ENCODE measurements at regions of chr1 and their contacts with region 1.

Region 1: GRCh38 chr1:85134576-85135395 is 66.0 kb downstream of the SYDE2 start:
- DNase-seq: no peak
- ATAC-seq: 0 out of 2 replicates have a peak, but pooled peaks have one; percentile 46
- H3K4me3 ChIP-seq: no peak overlapping the region
- H3K27ac ChIP-seq: no peak overlapping the region
- H3K4me1 ChIP-seq: peaks cover 5% of the 10 kb centered on the region; the same call in 1 of the 2 replicates
- H3K27me3 ChIP-seq: peaks cover 4% of the 10 kb centered on the region
- CTCF ChIP-seq: no peak

Region 2: DNA sequence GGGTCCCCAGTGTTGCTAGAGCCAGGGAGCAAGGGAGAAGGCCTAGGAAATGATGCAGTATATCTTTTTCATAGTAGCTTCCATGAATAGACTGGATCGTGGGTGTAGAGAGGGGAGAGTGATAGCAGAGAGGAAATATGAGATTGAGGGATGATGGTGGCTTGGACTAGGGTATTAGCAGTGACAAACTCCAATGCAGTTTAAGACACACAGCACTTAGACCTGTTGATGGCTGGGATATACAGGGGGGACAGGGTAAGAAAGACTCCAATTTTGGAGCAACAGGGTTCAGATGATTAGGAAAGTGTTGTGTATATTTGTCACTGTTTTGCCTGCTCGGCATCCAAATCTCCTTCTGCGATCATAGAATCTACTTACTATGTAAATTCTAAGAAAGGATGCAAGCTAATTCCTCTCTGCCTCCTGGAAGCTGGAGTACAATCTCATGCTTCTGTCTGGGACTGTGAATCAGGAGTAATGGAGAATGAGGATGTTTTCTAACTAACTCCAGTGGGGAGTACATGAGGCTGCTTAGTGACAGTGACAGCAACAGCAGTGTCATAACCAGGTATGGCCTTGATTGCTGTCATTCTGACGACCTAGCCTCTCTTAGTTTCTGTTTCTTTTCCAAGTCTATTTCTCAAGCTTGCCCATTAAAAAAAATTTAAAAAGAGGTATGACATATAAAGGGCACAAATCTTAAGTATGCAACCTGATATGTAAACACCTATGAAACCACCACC is 18.5 kb after region 1 on chr1:
- CTCF ChIA-PET with region 1: interaction called, 4 read pairs
- POLR2A ChIA-PET with region 1: interaction called, 13 read pairs
- in situ Hi-C with region 1: no loop called
- intact Hi-C with region 1: no loop called
- DNase-seq: no peak
- ATAC-seq: peak; percentile 52; the same call in 1 of the 2 replicates
- H3K4me3 ChIP-seq: no peak overlapping the region
- H3K27ac ChIP-seq: no peak overlapping the region
- H3K4me1 ChIP-seq: no peaks in the 10 kb centered on the region
- H3K27me3 ChIP-seq: no peaks in the 10 kb centered on the region
- CTCF ChIP-seq: no peak; the same call in 1 of the 2 replicates

Region 3: DNA sequence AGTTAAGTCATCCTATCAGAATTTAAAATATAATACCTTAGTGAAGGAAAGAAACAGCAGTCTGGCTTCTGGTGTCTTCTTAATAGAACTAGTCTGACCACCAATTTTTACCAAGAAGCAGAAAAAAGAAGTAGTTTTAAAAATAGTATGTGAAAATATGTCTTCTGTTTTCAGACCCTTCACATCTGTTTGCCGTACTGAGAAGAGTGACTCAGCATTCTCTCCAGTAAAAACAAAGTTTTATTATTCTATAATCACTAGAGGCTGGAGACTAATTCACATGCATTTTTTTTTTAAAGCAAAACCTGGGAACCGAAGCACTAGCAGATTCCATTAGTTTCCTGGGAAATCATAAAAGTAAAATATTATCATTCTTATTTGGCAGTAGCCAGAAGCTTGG is 858.0 kb after region 1 on chr1:
- CTCF ChIA-PET with region 1: no interaction called
- POLR2A ChIA-PET with region 1: no interaction called
- in situ Hi-C with region 1: no loop called
- intact Hi-C with region 1: no loop called
- DNase-seq: no peak
- ATAC-seq: no peak
- H3K4me3 ChIP-seq: no peak overlapping the region
- H3K27ac ChIP-seq: no peak overlapping the region
- H3K4me1 ChIP-seq: no peaks in the 10 kb centered on the region
- H3K27me3 ChIP-seq: peaks cover 1% of the 10 kb centered on the region; the same call in 1 of the 2 replicates
- CTCF ChIP-seq: no peak